GM23248 (cell line): ENCODE measurements at regions of chrX and their contacts with region 1.

Region 1: DNA sequence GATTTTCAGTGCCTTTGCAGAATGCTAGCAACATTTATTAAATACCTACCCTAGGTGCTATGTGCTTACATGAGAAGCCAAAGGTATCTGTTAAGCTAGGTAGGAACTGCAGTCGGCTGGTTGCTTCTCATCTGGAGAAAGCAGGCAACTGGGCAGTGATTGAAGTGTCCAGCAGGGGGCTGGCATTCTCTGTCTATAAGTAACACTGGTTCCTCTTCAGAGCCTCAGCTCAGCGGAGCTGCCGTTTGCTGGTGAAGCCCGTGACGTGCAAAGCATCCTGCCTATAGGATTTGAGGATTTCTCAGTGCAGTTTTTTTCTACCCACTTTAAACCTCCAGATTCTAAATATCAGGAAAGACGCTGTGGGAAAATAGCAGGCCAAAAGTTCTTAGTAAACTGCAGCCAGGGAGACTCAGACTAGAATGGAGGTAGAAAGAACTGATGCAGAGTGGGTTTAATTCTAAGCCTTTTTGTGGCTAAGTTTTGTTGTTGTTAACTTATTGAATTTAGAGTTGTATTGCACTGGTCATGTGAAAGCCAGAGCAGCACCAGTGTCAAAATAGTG is at the start of gene GRPR:
- DNase-seq: peak; percentile 88
- H3K4me3 ChIP-seq: no peak within 1 kb of the TSS
- H3K27ac ChIP-seq: no peak within 1 kb of the TSS
- H3K4me1 ChIP-seq: no peaks in the 10 kb centered on the region
- H3K27me3 ChIP-seq: no peaks in the 10 kb centered on the region
- total RNA-seq, gene GRPR: not detected in 2 replicates

Region 2: DNA sequence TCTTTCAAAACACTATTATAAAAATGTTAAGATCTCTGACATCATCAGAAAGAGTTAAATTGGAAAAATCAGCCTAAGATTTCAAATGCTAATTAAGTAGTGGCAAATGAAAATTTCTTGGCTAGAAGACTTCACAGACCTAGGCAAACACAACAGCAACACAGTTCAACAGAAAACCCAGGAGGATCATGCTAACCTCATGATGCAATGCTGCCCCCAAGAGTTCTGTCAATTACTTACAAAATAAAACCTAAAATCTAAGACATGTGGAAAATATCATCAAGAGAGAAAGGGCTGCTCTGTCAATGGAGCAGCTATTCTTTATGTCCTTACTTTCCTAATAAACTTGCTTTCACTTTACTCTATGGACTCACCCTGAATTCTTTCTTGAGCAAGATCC is 547.7 kb after region 1 on chrX:
- in situ Hi-C with region 1: loop called (anchors 10 kb)
- DNase-seq: peak; percentile 59
- H3K4me3 ChIP-seq: no peak overlapping the region
- H3K27ac ChIP-seq: no peak overlapping the region
- H3K4me1 ChIP-seq: peaks cover 7% of the 10 kb centered on the region; the same call in 1 of the 2 replicates
- H3K27me3 ChIP-seq: no peaks in the 10 kb centered on the region